CD8-positive, alpha-beta T cell (primary cell): ENCODE measurements at regions of chr17 and their contacts with region 1.

Region 1: GRCh38 chr17:48878918-48879898 is 13.4 kb upstream of the ATP5MC1 start:
- DNase-seq: peak; percentile 24 to 85 (median 58)
- ATAC-seq: peak; percentile 99
- H3K4me3 ChIP-seq: no peak overlapping the region
- H3K4me3 Mint-ChIP-seq: no peak overlapping the region
- H3K27ac ChIP-seq: no peak overlapping the region
- H3K27ac Mint-ChIP-seq: no peak overlapping the region
- H3K4me1 ChIP-seq: peaks cover 3% of the 10 kb centered on the region
- H3K4me1 Mint-ChIP-seq: no peaks in the 10 kb centered on the region
- H3K27me3 ChIP-seq: no peaks in the 10 kb centered on the region
- H3K27me3 Mint-ChIP-seq: peaks cover 11% of the 10 kb centered on the region
- CTCF ChIP-seq: peak; percentile 99

Region 2: DNA sequence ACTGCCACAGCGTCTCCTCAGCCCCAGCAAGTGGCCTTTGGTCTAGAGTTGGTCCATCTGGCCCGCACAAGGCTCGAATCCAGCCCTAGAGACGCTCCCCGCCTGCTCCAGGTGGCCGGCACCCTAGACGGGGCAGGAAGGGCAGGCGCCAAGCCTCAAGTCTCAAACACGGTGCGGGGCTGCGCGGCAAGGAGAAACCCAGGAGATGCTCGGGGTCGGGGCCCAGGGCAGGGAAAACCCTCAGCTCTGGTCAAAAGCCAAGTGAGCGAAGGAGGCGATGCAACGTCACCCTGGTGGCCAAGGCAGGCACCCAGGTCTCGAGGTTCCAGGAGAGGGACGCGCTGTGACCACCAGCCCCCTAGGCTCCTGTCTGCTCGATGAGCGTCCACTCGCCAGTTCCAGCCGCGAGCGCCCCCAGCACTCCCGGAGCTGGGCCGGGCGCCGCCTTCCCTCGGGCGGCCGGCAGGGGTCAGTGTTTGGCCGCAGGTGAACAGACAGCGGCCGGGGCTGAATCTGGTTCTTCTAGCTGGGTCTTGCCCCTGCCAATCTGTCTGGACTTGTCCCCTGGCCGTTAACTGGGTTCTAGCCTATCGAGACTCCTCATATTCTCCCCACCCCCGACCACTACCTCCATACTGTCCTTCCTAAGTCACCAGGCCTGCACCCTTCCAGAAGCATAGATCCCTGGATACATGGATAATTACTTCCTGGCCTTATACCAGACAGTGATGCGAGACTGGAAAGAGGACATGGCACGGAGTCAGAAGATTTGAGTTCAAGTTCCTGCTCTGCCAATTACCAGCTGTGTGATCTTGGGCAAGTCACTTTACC is 200.9 kb before region 1 on chr17:
- CTCF ChIA-PET with region 1: interaction called, 107 read pairs
- POLR2A ChIA-PET with region 1: no interaction called
- intact Hi-C with region 1: loop called in 1 of 2 experiments (anchors 1 kb)
- DNase-seq: peak; percentile 48 to 83 (median 64)
- ATAC-seq: peak; percentile 94
- H3K4me3 ChIP-seq: no peak overlapping the region
- H3K4me3 Mint-ChIP-seq: no peak overlapping the region
- H3K27ac ChIP-seq: no peak overlapping the region
- H3K27ac Mint-ChIP-seq: no peak overlapping the region
- H3K4me1 ChIP-seq: peaks cover 4% of the 10 kb centered on the region
- H3K4me1 Mint-ChIP-seq: no peaks in the 10 kb centered on the region
- H3K27me3 ChIP-seq: peaks cover 0 to 11% of the 10 kb centered on the region in 2 experiments
- H3K27me3 Mint-ChIP-seq: peaks cover 47% of the 10 kb centered on the region
- CTCF ChIP-seq: peak; percentile 81

Region 3: GRCh38 chr17:48804925-48805411 is 74.2 kb before region 1 on chr17:
- CTCF ChIA-PET with region 1: interaction called, 706 read pairs
- POLR2A ChIA-PET with region 1: interaction called, 6 read pairs
- intact Hi-C with region 1: loop called (anchors 1 kb)
- DNase-seq: peak; percentile 50 to 80 (median 67)
- ATAC-seq: peak; percentile 99
- H3K4me3 ChIP-seq: no peak overlapping the region
- H3K4me3 Mint-ChIP-seq: no peak overlapping the region
- H3K27ac ChIP-seq: no peak overlapping the region
- H3K27ac Mint-ChIP-seq: no peak overlapping the region
- H3K4me1 ChIP-seq: no peaks in the 10 kb centered on the region
- H3K4me1 Mint-ChIP-seq: no peaks in the 10 kb centered on the region
- H3K27me3 ChIP-seq: no peaks in the 10 kb centered on the region
- H3K27me3 Mint-ChIP-seq: peaks cover 14% of the 10 kb centered on the region
- CTCF ChIP-seq: peak; percentile 87

Region 4: DNA sequence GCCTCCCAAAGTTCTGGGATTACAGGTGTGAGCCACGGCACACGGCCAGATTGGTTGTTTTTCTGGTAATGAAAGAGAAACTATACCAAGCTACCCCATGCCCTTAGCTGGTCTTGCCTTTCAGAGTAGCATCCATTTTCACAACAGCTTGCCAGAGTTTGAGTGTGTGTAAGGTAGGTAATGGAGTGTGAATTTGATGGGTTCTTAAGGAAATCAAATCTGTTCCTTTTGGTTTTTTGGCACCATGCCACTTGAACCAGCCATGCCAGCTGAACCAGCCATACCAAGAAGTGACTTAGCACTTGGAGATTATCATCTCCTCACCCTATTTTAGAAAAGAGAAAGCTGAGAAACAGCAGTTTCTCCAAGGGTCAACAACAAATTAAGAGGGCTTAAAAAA is 43.2 kb before region 1 on chr17:
- CTCF ChIA-PET with region 1: interaction called, 26 read pairs
- POLR2A ChIA-PET with region 1: no interaction called
- intact Hi-C with region 1: no loop called
- DNase-seq: peak in 2 of 9 experiments; percentile 26 to 59
- ATAC-seq: no peak
- H3K4me3 ChIP-seq: no peak overlapping the region
- H3K4me3 Mint-ChIP-seq: no peak overlapping the region
- H3K27ac ChIP-seq: no peak overlapping the region
- H3K27ac Mint-ChIP-seq: no peak overlapping the region
- H3K4me1 ChIP-seq: peaks cover 64% of the 10 kb centered on the region
- H3K4me1 Mint-ChIP-seq: peaks cover 81% of the 10 kb centered on the region
- H3K27me3 ChIP-seq: no peaks in the 10 kb centered on the region
- H3K27me3 Mint-ChIP-seq: no peaks in the 10 kb centered on the region
- CTCF ChIP-seq: no peak

Region 5: GRCh38 chr17:48860034-48860433 is 19.2 kb before region 1 on chr17:
- CTCF ChIA-PET with region 1: interaction called, 39 read pairs
- POLR2A ChIA-PET with region 1: interaction called, 3 read pairs
- intact Hi-C with region 1: no loop called
- DNase-seq: no peak
- ATAC-seq: no peak
- H3K4me3 ChIP-seq: no peak overlapping the region
- H3K4me3 Mint-ChIP-seq: no peak overlapping the region
- H3K27ac ChIP-seq: no peak overlapping the region
- H3K27ac Mint-ChIP-seq: no peak overlapping the region
- H3K4me1 ChIP-seq: no peaks in the 10 kb centered on the region
- H3K4me1 Mint-ChIP-seq: no peaks in the 10 kb centered on the region
- H3K27me3 ChIP-seq: no peaks in the 10 kb centered on the region
- H3K27me3 Mint-ChIP-seq: no peaks in the 10 kb centered on the region
- CTCF ChIP-seq: no peak